HepG2 (cell line): ENCODE measurements at regions of chr11 and their contacts with region 1.

Region 1: DNA sequence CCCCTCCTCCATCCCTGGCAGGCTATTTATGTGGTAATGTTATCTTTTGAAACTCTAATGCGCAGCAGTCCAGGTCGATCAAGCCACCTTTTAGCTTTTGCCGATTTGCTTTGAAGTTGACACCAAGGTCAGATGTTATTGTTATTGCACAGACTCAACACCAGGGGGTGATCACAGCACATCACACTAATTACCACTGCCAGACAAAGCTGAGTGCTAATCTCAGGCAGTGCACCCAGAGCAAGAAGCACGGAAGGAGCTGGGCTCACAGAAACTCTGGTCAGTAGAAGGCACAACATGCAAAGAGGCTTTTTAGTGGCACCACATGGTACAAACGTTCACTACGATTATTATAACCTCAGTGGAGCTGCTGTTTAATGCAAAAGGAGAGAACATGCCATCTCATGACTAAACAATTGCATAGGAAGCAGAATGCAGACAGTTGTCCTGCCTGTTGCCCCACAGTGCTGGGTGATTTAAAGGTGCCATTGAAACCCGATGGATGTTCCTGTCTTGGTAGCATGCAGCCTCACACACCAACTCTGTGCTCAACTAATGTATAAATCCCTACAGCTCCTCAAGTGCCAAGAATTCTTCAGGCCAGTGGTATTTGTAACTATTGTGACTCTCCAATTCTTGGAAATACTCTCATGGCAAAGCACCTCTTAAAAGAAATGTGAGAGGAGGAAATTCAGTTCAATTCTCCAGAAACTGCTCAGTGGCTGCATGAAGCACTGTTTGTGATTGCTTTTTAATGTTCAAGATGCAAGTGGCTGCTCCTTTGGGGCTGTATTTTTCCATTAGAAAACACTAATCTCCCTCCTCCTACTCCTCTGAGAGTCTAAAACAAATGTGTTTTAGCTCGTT is 353.9 kb upstream of the DDI1 start:
- DNase-seq: peak; percentile 67
- ATAC-seq: peak; percentile 96
- H3K4me3 ChIP-seq: no peak overlapping the region
- H3K27ac ChIP-seq: no peak overlapping the region
- H3K4me1 ChIP-seq: no peaks in the 10 kb centered on the region
- H3K27me3 ChIP-seq: no peaks in the 10 kb centered on the region
- CTCF ChIP-seq: peak; percentile 82
- EP300 ChIP-seq: no peak
- POLR2A ChIP-seq: no peak
- RAD21 ChIP-seq: peak; percentile 50

Region 2: DNA sequence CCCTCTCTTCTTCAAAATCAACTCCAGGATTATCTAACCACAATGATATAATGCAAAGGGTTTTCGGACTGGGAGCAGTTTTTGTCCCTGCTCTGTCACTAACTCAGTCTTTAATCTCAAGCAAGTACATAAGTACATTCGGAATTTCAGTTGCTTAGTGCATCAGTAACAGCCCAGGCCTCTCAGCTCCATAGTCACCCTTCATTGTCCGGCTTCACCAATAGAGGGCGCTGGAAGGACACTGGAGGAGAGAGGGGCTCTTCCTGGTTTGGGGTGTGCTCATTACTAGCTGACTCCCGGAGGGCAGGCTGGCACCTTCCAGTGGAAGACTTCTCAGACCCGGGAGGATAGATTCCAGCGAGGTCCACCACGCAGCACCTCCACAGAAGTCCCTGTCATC is 571.8 kb after region 1 on chr11:
- CTCF ChIA-PET with region 1: no interaction called
- POLR2A ChIA-PET with region 1: no interaction called
- in situ Hi-C with region 1: no loop called
- intact Hi-C with region 1: loop called (anchors 1 kb)
- DNase-seq: peak; percentile 24
- ATAC-seq: peak; percentile 76
- H3K4me3 ChIP-seq: no peak overlapping the region
- H3K27ac ChIP-seq: no peak overlapping the region
- H3K4me1 ChIP-seq: no peaks in the 10 kb centered on the region
- H3K27me3 ChIP-seq: no peaks in the 10 kb centered on the region
- CTCF ChIP-seq: peak; percentile 71
- EP300 ChIP-seq: no peak
- POLR2A ChIP-seq: no peak
- RAD21 ChIP-seq: no peak